Activated CD4-positive, alpha-beta memory T cell treated with anti-CD3 and anti-CD28 coated beads, Interleukin-2, amount 10 ng/mL, durations not matched to agents 7 days and 5 days (primary cell): ENCODE measurements at regions of chr4 and their contacts with region 1.

Region 1: DNA sequence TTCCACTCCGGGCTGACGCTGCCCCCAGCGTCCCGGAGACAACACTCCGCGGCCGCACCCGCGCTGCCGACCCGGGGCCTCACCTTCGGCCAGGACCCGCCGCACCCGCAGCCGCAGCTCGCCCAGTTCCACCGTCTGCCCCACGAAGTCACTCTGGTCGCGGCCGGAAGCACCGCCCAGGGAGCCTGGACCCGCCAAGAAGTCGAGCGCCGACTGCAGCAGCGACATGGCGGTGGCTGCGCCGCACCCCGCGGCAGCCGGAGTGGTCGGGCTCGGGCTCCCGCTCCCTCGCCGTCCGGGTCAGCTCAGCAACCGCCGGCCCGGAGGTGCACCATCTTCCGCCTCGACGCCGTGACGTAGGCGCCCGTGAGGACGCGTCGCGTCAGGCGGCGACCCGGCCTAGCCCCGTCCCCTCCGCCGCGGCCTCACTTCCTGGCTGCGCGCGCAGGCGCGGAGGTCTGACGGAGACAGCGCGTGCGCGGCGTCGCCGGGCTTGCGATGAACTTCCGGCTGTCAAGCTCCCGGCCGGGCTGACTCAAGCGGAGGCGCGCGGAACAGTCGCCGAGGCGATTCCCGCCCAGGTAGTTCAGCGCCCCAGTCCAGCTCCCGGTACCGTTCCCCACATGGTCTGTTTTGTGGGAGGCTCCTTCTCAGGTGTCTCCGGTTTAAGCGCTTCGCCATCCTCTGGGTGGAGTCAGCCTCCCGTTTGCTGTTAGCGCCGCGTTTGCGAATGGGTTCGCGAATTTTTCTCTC is at the starts of genes GAK and TMEM175:
- DNase-seq: peak; percentile 98
- H3K4me3 Mint-ChIP-seq: peak within 1 kb of the TSS; percentile 92
- H3K27ac Mint-ChIP-seq: peak within 1 kb of the TSS; percentile 94
- H3K4me1 Mint-ChIP-seq: peaks cover 47% of the 10 kb centered on the region
- H3K27me3 Mint-ChIP-seq: no peaks in the 10 kb centered on the region
- total RNA-seq, gene GAK: 139 to 156 TPM
- total RNA-seq, gene TMEM175: 24.1 to 28.8 TPM

Region 2: GRCh38 chr4:879729-880077 is 52.4 kb before region 1 on chr4:
- CTCF ChIA-PET with region 1: interaction called, 6 read pairs
- POLR2A ChIA-PET with region 1: interaction called, 29 read pairs
- DNase-seq: peak; percentile 68
- H3K4me3 Mint-ChIP-seq: peak overlapping the region; percentile 71
- H3K27ac Mint-ChIP-seq: peak overlapping the region; percentile 100
- H3K4me1 Mint-ChIP-seq: peaks cover 31% of the 10 kb centered on the region
- H3K27me3 Mint-ChIP-seq: no peaks in the 10 kb centered on the region

Region 3: DNA sequence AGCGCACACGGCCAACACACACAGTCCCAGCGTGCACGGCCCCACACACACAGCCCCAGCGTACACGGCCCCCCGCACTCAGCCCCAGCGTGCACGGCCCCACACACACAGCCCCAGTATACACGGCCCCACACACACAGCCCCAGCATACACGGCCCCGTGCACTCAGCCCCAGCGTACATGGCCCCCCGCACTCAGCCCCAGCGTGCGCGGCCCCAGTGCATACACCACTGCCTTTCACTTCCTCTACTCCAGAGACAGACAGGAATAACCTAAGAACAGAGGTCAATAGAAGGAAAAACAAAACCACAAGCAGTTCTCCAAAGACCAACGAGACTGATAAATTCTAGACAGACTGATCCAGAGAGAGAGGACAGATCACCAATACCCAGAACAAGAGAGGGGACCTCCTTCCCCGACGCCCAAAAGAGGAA is 17.1 kb before region 1 on chr4:
- CTCF ChIA-PET with region 1: no interaction called
- POLR2A ChIA-PET with region 1: no interaction called
- DNase-seq: no peak
- H3K4me3 Mint-ChIP-seq: no peak overlapping the region
- H3K27ac Mint-ChIP-seq: no peak overlapping the region
- H3K4me1 Mint-ChIP-seq: peaks cover 27% of the 10 kb centered on the region
- H3K27me3 Mint-ChIP-seq: no peaks in the 10 kb centered on the region

Region 4: DNA sequence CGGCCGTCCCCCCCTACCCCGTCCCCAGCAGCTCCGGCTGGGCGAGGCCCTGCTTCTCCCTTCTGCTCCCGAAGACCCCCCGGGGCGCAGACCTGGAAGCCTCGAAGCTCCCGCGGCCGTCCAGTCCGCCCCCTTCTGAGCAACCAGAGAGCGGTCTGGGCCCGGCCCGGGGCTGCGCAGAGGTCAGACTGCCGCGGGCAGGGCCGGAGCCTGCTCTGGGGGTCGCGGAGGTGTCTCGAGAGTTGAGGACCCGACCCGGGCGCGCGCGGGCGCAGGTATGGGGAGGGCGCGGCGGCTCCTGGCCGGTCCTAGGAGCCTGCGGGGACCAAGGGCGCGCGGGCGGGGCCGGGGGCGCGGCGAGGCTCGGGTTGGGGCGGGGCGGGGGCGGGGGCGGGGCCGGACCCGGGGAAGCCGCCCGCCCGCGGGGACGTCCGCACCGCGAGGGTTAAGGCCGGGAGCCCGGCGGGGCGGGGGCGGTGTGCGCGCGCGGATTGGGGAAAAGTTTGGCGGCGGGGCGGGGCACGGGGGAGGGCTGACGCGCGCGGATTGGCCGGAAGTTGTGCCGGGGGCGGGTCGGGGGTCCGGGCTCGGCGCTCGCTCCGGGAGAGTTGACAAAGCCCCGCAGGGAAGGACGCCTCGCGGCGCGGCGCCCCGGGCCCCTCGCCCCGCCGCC is 79.0 kb after region 1 on chr4 and contains the start of gene FGFRL1:
- CTCF ChIA-PET with region 1: interaction called, 3 read pairs
- POLR2A ChIA-PET with region 1: interaction called, 11 read pairs
- DNase-seq: peak; percentile 93
- H3K4me3 Mint-ChIP-seq: peak within 1 kb of the TSS; percentile 76
- H3K27ac Mint-ChIP-seq: peak within 1 kb of the TSS; percentile 82
- H3K4me1 Mint-ChIP-seq: peaks cover 13% of the 10 kb centered on the region
- H3K27me3 Mint-ChIP-seq: peaks cover 27% of the 10 kb centered on the region
- total RNA-seq, gene FGFRL1: 7.1 to 8.9 TPM